ENCODE measurements at regions of chr3 and their contacts with region 1.

Region 1: GRCh38 chr3:45499529-45499928 is 95.0 kb upstream of the LIMD1 start:
- DNase-seq: no peak
- ATAC-seq: no peak
- H3K4me3 ChIP-seq: no peak overlapping the region
- H3K4me1 ChIP-seq: no peaks in the 10 kb centered on the region
- CTCF ChIP-seq: no peak

Region 2: GRCh38 chr3:45043728-45044299 is 455.7 kb before region 1 on chr3:
- intact Hi-C with region 1: loop called (anchors 5 kb)
- DNase-seq: no peak
- ATAC-seq: no peak
- H3K4me3 ChIP-seq: no peak overlapping the region
- H3K4me1 ChIP-seq: peaks cover 9% of the 10 kb centered on the region
- CTCF ChIP-seq: no peak

Region 3: GRCh38 chr3:45224824-45225464 is 274.6 kb before region 1 on chr3:
- intact Hi-C with region 1: loop called (anchors 10 kb)
- DNase-seq: peak; percentile 77 to 82 (median 81)
- ATAC-seq: peak; percentile 77
- H3K4me3 ChIP-seq: peak overlapping the region; percentile 17
- H3K4me1 ChIP-seq: peaks cover 5% of the 10 kb centered on the region
- CTCF ChIP-seq: peak; percentile 24

Region 4: GRCh38 chr3:45321607-45322391 is 177.7 kb before region 1 on chr3:
- intact Hi-C with region 1: no loop called
- DNase-seq: no peak
- ATAC-seq: no peak
- H3K4me3 ChIP-seq: no peak overlapping the region
- H3K4me1 ChIP-seq: no peaks in the 10 kb centered on the region
- CTCF ChIP-seq: no peak